AG04449 (cell line): ENCODE measurements at regions of chr4 and their contacts with region 1.

Region 1: GRCh38 chr4:150192986-150193385 is 114.7 kb downstream of the DCLK2 start:
- DNase-seq: no peak
- H3K4me3 ChIP-seq: no peak overlapping the region
- CTCF ChIP-seq: no peak

Region 2: DNA sequence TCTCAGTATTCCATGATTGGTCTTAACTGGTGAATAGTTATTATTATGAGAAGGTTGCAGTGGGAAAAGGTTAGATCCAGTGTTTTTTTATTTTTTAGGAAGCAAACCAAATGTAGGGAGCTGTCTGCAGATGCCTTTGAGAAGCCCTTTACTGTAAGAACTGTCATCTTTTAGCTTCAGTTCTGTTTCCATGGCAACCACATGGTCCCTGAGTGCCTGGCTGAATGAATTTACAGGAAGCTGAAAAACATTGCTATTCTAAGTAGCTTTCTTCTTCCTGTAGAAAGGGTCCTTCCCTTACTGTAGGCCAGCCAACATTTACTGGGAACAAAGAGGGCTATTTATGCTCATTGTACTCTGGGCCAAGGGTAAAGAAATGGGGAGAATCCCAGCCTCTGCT is 11.4 kb before region 1 on chr4:
- CTCF ChIA-PET with region 1: interaction called, 13 read pairs
- POLR2A ChIA-PET with region 1: no interaction called
- DNase-seq: no peak
- H3K4me3 ChIP-seq: no peak overlapping the region
- CTCF ChIP-seq: no peak